RWPE1 (cell line): ENCODE measurements at regions of chr5 and their contacts with region 1.

Region 1: DNA sequence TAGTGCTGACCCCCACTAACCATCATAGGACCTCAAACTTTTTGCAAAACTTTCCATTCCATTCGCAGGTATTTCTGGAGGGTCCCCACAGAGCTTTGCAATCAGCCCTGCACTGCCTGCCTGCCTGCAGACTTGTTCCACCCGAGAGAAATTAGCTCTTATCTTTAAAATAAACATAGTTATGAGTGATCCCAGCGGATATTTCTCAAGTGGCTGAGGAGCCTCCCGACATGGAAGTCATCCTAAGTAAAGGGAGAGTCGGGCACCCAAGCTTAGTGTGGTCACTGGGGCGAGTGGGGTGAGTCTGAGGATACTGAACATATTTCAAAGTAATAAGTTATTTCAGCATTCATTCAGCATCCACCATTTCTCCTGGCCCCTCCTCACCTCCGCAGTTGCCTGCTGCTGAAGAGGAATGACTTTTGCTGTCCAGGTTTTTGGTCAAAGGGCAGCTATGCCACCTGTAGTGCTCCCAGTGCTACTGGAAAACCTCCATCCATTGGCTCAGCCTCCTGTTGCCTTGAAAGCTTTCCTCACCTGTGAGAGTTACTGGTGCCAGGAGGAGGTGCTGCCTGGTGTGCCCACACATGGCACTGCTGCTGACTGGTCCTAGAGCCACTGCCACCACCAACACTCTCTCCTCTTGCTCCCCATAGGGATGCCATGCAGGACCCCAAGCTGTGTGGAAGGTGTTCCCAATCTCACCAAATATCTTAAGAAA is 89.7 kb upstream of the PCSK1 start:
- DNase-seq: no peak
- H3K27ac ChIP-seq: no peak overlapping the region
- CTCF ChIP-seq: no peak

Region 2: DNA sequence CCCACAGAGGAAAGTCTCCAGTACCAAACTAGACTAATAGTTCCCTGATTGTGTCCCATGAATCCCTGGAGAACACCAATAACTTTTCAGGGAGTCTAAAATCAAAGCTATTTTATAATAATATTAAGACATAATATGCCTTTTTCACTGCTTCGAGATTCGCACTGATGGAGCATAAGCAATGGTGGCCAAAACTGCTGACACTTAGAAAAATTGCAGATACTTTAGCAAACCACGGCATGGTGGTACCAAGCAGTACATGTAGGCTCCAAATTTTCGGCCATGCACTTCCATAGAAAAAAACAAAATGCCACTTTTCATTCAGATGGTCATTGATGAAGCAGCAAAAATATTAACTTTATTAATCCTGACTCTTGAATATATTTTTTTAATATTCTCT is 10.6 kb after region 1 on chr5:
- CTCF ChIA-PET with region 1: interaction called, 11 read pairs
- POLR2A ChIA-PET with region 1: no interaction called
- DNase-seq: no peak
- H3K27ac ChIP-seq: no peak overlapping the region
- CTCF ChIP-seq: no peak